Aorta (tissue), 5 donors: ENCODE measurements at regions of chr15 and their contacts with region 1.

Region 1: DNA sequence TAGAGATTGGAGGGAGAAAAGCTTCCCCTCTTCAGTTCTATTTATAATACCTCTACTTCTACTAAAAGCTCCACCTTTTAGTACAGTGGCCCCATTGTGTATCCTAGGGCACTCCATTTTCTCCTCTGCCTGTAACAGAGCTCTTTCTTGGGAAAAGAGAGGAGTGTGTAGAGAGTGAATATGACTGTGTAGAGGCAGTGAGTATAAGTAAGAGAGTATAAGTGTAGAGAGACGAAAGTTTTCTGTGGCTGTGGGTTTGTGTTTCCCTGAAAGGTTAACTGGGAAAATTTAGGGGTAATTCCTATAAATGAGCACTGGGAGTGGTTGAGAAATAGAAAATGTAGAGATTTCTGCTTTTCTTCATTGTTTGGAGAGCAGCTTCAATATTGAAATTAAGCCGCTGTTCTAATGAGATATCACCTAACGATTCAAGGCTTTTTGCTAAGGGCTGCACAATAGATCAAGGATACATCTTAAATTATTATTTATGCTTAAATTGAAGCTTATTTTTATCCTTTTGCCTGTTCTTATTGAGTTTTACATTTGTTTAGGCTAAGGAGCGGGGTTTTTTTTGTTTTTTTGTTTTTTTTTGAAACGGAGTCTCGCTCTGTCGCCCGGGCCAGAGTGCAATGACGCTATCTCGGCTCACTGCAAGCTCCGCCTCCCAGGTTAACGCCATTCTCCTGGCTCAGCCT is 6.9 kb downstream of the IQGAP1 start:
- DNase-seq: no peak
- ATAC-seq: no peak
- H3K4me3 ChIP-seq: no peak overlapping the region
- H3K27ac ChIP-seq: no peak overlapping the region
- H3K4me1 ChIP-seq: peaks cover 9 to 11% of the 10 kb centered on the region in 2 donors
- H3K27me3 ChIP-seq: no peaks in the 10 kb centered on the region

Region 2: DNA sequence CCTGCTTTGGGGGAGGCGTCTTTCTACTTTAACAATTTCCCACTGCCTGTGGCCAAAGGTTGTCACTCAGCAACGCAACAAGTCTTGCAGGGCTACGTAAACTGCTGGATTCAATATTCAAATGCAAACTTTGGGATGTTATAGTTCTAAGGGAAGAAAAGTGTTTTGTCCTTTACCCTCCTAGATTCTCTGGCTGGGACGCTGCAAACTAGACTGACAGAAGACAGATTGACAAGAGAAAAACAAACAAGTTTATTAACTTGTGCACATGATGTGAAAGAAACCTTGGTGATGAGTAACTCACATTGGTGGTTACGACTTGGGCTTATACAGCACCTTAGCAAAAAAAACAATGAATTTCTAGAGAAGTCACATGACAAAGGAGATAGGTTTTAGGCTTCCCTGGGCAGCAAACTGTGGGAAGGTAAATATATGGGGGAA is 448.1 kb before region 1 on chr15:
- intact Hi-C with region 1: no loop called
- DNase-seq: no peak
- ATAC-seq: no peak
- H3K4me3 ChIP-seq: no peak overlapping the region
- H3K27ac ChIP-seq: no peak overlapping the region
- H3K4me1 ChIP-seq: no peaks in the 10 kb centered on the region
- H3K27me3 ChIP-seq: no peaks in the 10 kb centered on the region

Region 3: DNA sequence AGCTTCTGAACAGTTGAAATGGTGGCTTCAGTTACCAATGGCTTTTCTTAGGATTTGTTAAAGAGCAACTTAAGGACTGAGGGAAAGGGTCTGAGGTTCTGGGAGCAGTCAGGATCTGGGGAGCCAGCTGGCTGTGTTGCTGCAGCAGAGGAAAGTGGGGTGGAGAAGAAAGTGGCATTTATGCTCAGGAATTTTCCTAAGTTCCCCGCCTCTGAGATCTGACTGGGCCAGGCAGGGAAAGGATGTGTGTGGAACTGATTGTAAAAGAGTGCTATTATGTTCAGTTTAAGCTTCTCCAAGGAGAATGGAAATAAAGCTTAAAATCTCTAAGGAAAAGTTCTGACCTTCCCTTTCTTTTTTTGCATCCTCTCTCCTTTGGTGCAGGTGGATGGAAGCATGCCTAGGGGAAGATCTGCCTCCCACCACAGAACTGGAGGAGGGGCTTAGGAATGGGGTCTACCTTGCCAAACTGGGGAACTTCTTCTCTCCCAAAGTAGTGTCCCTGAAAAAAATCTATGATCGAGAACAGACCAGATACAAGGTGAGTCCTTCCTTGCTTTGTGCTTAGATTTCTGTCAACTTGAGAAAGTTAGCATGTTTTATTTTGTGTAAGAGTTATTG is 30.9 kb after region 1 on chr15:
- intact Hi-C with region 1: loop called in 1 of 2 experiments (anchors 5 kb)
- DNase-seq: no peak
- ATAC-seq: peak; percentile 44
- H3K4me3 ChIP-seq: no peak overlapping the region
- H3K27ac ChIP-seq: no peak overlapping the region
- H3K4me1 ChIP-seq: peaks cover 4 to 16% of the 10 kb centered on the region in 2 donors
- H3K27me3 ChIP-seq: no peaks in the 10 kb centered on the region

Region 4: GRCh38 chr15:90469723-90470122 is 74.8 kb after region 1 on chr15:
- intact Hi-C with region 1: loop called in 1 of 2 experiments (anchors 2 kb)
- DNase-seq: no peak
- ATAC-seq: no peak
- H3K4me3 ChIP-seq: no peak overlapping the region
- H3K27ac ChIP-seq: no peak overlapping the region
- H3K4me1 ChIP-seq: peaks cover 2 to 6% of the 10 kb centered on the region in 2 donors
- H3K27me3 ChIP-seq: no peaks in the 10 kb centered on the region

Region 5: GRCh38 chr15:90598031-90598577 is 203.2 kb after region 1 on chr15:
- intact Hi-C with region 1: loop called in 1 of 2 experiments (anchors 10 kb)
- DNase-seq: no peak
- ATAC-seq: no peak
- H3K4me3 ChIP-seq: no peak overlapping the region
- H3K27ac ChIP-seq: peak overlapping the region; percentile 8 to 87
- H3K4me1 ChIP-seq: peaks cover 0 to 8% of the 10 kb centered on the region in 2 donors
- H3K27me3 ChIP-seq: no peaks in the 10 kb centered on the region